T-cell (primary cell): ENCODE measurements at regions of chr4 and their contacts with region 1.

Region 1: DNA sequence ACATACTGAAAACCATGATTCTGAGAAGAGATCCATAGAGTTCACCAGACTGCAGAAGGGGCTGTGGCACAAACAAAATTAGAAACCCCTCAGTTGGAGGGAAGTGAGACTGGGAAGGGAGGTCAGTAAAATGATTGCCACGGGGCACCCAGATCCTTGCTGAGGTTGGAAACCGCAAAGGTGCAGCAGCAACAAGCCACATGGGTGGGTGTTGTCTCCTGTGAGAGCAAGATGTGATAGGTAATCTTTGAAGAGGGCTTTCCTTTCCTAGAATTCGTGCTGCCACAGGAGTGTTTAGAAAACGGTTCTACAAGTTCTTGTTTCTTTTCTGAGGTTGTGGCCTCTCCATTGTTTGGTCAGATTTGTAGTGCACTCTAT is 85.5 kb downstream of the NFKB1 start:
- DNase-seq: peak in 20 of 35 experiments; percentile 5 to 52 (median 19)
- ATAC-seq: peak; percentile 66 to 91 (median 86)
- H3K4me3 ChIP-seq: peak overlapping the region in 1 of 2 donors; percentile 12
- H3K4me3 Mint-ChIP-seq: peak overlapping the region in 2 of 3 donors; percentile 25 to 50
- H3K27ac ChIP-seq: peak overlapping the region; percentile 51
- H3K27ac Mint-ChIP-seq: peak overlapping the region; percentile 91 to 94
- H3K4me1 ChIP-seq: peaks cover 28 to 38% of the 10 kb centered on the region in 2 experiments
- H3K4me1 Mint-ChIP-seq: peaks cover 75 to 82% (median 76%) of the 10 kb centered on the region in 3 donors
- H3K27me3 ChIP-seq: no peaks in the 10 kb centered on the region
- H3K27me3 Mint-ChIP-seq: no peaks in the 10 kb centered on the region

Region 2: DNA sequence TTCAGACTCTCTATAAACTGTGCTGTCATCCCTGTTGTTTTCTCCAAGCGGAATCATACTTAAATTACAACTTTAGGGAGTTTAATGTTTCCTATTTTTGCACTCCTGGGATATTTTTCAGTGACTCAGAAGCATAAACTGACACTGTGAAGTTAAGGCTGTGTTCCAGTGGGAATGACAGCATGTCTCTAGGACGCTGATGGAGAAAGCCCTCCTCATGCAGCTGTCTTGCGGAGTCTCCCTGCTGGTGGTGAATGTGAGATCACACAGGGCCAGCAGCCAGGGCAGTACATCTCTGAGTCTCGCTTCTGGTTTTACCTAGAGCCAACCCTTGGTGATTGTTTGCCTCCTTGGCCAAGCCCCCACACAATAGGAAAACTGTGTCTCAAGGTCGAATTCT is 32.2 kb before region 1 on chr4:
- CTCF ChIA-PET with region 1: interaction called, 3 to 4 read pairs
- POLR2A ChIA-PET with region 1: interaction called in 1 of 2 experiments, 12 read pairs
- DNase-seq: no peak
- ATAC-seq: no peak
- H3K4me3 ChIP-seq: no peak overlapping the region
- H3K4me3 Mint-ChIP-seq: no peak overlapping the region
- H3K27ac ChIP-seq: no peak overlapping the region
- H3K27ac Mint-ChIP-seq: peak overlapping the region; percentile 5 to 52
- H3K4me1 ChIP-seq: peaks cover 15 to 16% of the 10 kb centered on the region in 2 experiments
- H3K4me1 Mint-ChIP-seq: peaks cover 42 to 57% (median 50%) of the 10 kb centered on the region in 3 donors
- H3K27me3 ChIP-seq: no peaks in the 10 kb centered on the region
- H3K27me3 Mint-ChIP-seq: no peaks in the 10 kb centered on the region